ENCODE measurements at regions of chr1 and their contacts with region 1.

Region 1: DNA sequence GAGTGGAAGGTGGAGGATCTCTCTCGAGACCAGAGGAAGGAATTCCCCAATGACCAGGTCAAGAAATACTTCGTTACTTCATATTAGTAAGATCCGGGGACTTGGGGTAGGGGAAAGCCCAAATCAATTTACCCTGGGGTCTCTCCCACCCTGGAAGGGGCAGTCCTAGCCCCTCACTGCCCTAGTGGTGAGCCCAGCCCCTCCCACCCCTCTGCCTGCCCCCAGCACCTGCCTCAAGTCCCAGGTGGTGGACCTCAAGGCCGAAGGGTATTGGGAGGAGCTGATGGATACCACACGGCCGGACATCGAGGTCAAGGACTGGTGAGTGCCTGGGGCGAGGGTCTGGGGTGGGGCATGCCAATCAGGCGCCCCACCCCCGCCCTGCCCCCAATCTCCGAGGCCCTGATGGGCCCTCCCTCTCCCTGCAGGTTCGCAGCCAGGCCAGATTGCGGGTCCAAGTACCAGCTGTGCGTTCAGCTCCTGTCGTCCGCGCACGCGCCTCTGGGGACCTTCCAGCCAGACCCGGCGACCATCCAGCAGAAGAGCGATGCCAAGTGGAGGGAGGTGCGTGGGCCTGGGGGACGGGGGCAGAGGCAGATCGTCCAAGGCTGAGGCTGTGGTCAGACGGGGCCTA is 3.7 kb downstream of the FBXO44 start:
- DNase-seq: no peak
- H3K4me3 Mint-ChIP-seq: no peak overlapping the region
- H3K27ac Mint-ChIP-seq: no peak overlapping the region
- H3K4me1 Mint-ChIP-seq: peaks cover 17% of the 10 kb centered on the region
- H3K27me3 Mint-ChIP-seq: no peaks in the 10 kb centered on the region

Region 2: DNA sequence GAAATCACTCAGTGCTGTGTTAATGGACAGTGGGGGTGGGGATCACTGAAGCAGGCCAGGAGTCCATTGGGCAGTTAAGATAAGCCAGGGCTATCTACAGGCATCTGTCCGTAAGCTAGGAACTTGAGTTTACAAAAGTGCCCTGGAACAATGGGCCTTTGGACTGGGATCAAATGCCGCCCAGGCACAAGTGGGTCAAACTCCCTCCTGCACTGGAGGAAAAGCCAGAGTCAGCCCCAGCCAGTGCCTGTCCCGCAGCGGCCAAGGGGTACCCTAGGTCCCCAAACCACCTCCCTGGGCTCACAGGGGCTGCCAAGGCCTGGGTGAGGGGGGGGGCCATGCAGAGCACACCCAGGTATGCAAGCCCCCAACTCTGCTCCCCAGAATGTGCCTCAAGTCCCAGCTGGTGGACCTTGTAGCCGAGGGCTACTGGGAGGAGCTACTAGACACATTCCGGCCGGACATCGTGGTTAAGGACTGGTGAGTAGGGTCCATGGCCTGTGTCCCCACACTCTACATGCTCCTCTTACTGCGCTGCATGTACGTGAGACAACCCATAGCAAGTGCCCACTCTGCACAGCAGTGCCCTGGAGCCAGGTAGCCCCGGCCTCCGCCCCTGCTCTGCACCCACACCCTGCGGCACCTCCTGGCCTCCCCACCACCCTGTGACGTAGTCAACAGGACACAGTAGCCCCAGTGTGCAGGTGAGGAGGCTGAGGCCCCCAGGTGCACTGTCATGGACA is 13.3 kb after region 1 on chr1:
- CTCF ChIA-PET with region 1: interaction called, 49 read pairs
- POLR2A ChIA-PET with region 1: no interaction called
- DNase-seq: no peak
- H3K4me3 Mint-ChIP-seq: no peak overlapping the region
- H3K27ac Mint-ChIP-seq: no peak overlapping the region
- H3K4me1 Mint-ChIP-seq: peaks cover 9% of the 10 kb centered on the region
- H3K27me3 Mint-ChIP-seq: no peaks in the 10 kb centered on the region

Region 3: GRCh38 chr1:11681071-11681771 is 22.8 kb after region 1 on chr1 and contains the start of gene MAD2L2:
- CTCF ChIA-PET with region 1: interaction called, 49 read pairs
- POLR2A ChIA-PET with region 1: interaction called, 3 read pairs
- DNase-seq: peak; percentile 91
- H3K4me3 Mint-ChIP-seq: peak within 1 kb of the TSS; percentile 80
- H3K27ac Mint-ChIP-seq: peak within 1 kb of the TSS; percentile 87
- H3K4me1 Mint-ChIP-seq: peaks cover 17% of the 10 kb centered on the region
- H3K27me3 Mint-ChIP-seq: peaks cover 14% of the 10 kb centered on the region
- total RNA-seq, gene MAD2L2: 68.7 to 73.3 TPM

Measured in activated CD4-positive, alpha-beta T cell treated with anti-CD3 and anti-CD28 coated beads, Interleukin-2, amount 10 ng/mL, durations not matched to agents 7 days and 5 days (primary cell).